Activated CD4-positive, alpha-beta memory T cell treated with anti-CD3 and anti-CD28 coated beads for 36 hours (primary cell): ENCODE measurements at regions of chr11 and their contacts with region 1.

Region 1: GRCh38 chr11:128157423-128158298 is 429.7 kb downstream of the ETS1 start:
- DNase-seq: peak; percentile 53
- H3K4me3 Mint-ChIP-seq: peak overlapping the region; percentile 59
- H3K27ac Mint-ChIP-seq: peak overlapping the region; percentile 59
- H3K4me1 Mint-ChIP-seq: peaks cover 10% of the 10 kb centered on the region
- H3K27me3 Mint-ChIP-seq: no peaks in the 10 kb centered on the region

Region 2: DNA sequence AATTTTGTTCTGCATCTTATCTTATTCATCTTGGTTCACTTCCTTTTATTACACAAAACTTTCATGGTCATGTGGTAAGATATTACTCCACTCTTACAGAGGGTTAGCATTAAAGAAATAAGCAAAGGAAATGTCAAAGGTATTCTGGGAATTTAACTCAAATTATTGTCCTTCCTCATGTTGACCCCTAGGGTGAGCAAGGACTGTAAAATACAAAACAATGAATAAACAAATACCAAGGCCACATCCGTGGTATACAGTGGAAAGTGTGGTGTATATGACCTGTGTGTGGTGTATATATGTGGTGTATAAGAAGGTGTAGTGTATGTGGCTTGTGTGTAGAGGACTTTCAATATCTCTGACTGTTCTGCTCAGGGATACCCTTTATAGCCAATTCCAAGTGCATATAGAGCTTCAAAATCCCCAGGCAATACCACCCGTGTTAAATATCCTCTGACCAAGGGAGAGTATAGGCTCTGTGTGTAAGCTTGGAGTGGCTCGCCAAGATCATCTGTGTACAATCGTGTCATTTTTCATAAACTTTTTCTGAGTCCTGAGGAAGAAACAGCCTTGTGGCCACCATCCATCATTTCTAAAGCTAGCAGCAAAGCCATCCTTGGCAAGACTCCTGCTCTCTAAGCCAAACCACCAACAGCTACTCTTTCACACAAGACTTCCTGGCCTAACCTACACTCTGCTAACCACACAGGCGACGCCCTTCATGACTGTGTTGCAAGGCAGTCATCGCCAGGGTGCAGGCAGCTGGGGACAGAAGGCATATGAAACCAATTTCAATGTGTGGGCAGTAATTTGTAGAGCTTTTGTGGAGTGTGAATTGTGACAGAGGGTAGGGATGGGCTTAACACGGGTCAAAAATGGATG is 118.3 kb before region 1 on chr11:
- CTCF ChIA-PET with region 1: interaction called, 94 read pairs
- POLR2A ChIA-PET with region 1: interaction called, 3 read pairs
- intact Hi-C with region 1: no loop called
- DNase-seq: peak; percentile 90
- H3K4me3 Mint-ChIP-seq: peak overlapping the region; percentile 61
- H3K27ac Mint-ChIP-seq: peak overlapping the region; percentile 89
- H3K4me1 Mint-ChIP-seq: peaks cover 52% of the 10 kb centered on the region
- H3K27me3 Mint-ChIP-seq: no peaks in the 10 kb centered on the region

Region 3: GRCh38 chr11:128172046-128172878 is 14.6 kb after region 1 on chr11:
- CTCF ChIA-PET with region 1: interaction called, 121 read pairs
- POLR2A ChIA-PET with region 1: no interaction called
- intact Hi-C with region 1: loop called (anchors 1 kb)
- DNase-seq: peak; percentile 91
- H3K4me3 Mint-ChIP-seq: no peak overlapping the region
- H3K27ac Mint-ChIP-seq: peak overlapping the region; percentile 25
- H3K4me1 Mint-ChIP-seq: peaks cover 17% of the 10 kb centered on the region
- H3K27me3 Mint-ChIP-seq: no peaks in the 10 kb centered on the region

Region 4: GRCh38 chr11:128297091-128297651 is 139.5 kb after region 1 on chr11:
- CTCF ChIA-PET with region 1: no interaction called
- POLR2A ChIA-PET with region 1: no interaction called
- intact Hi-C with region 1: no loop called
- DNase-seq: peak; percentile 32
- H3K4me3 Mint-ChIP-seq: no peak overlapping the region
- H3K27ac Mint-ChIP-seq: peak overlapping the region; percentile 94
- H3K4me1 Mint-ChIP-seq: peaks cover 90% of the 10 kb centered on the region
- H3K27me3 Mint-ChIP-seq: no peaks in the 10 kb centered on the region

Region 5: GRCh38 chr11:128776424-128777284 is 619.0 kb after region 1 on chr11:
- CTCF ChIA-PET with region 1: interaction called, 10 read pairs
- POLR2A ChIA-PET with region 1: no interaction called
- intact Hi-C with region 1: no loop called
- DNase-seq: peak; percentile 48
- H3K4me3 Mint-ChIP-seq: no peak overlapping the region
- H3K27ac Mint-ChIP-seq: peak overlapping the region; percentile 53
- H3K4me1 Mint-ChIP-seq: peaks cover 41% of the 10 kb centered on the region
- H3K27me3 Mint-ChIP-seq: no peaks in the 10 kb centered on the region

Region 6: GRCh38 chr11:128837627-128838026 is 680.0 kb after region 1 on chr11:
- CTCF ChIA-PET with region 1: interaction called, 67 read pairs
- POLR2A ChIA-PET with region 1: no interaction called
- intact Hi-C with region 1: no loop called
- DNase-seq: peak; percentile 57
- H3K4me3 Mint-ChIP-seq: no peak overlapping the region
- H3K27ac Mint-ChIP-seq: no peak overlapping the region
- H3K4me1 Mint-ChIP-seq: peaks cover 53% of the 10 kb centered on the region
- H3K27me3 Mint-ChIP-seq: no peaks in the 10 kb centered on the region

Region 7: GRCh38 chr11:128956401-128957201 is 798.9 kb after region 1 on chr11:
- CTCF ChIA-PET with region 1: interaction called, 10 read pairs
- POLR2A ChIA-PET with region 1: no interaction called
- intact Hi-C with region 1: loop called (anchors 10 kb)
- DNase-seq: no peak
- H3K4me3 Mint-ChIP-seq: no peak overlapping the region
- H3K27ac Mint-ChIP-seq: no peak overlapping the region
- H3K4me1 Mint-ChIP-seq: peaks cover 2% of the 10 kb centered on the region
- H3K27me3 Mint-ChIP-seq: peaks cover 15% of the 10 kb centered on the region